Right lobe of liver (tissue), 6 donors: ENCODE measurements at regions of chr11 and their contacts with region 1.

Region 1: DNA sequence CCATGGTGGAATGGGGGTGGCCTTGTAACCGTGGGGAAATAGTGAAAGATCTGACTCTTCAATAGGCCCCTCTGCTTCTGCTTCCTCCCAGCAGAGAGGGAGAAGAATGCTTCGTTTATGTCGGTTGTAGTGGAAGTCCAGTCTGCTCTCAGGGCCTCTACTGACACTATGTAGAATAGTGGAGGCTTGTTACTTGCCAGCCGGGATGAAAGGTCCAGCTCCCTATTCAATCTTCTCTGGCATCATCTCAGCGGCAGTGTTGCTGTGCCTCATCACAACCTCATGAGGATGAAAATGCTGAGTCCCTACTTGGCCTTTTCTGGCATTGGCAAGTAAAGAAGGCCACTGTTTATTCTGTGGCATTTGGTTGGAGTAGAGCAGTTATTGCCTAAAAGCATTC is 820.9 kb upstream of the TENM4 start:
- DNase-seq: no peak
- ATAC-seq: no peak
- H3K4me3 ChIP-seq: no peak overlapping the region
- H3K27ac ChIP-seq: no peak overlapping the region
- H3K4me1 ChIP-seq: no peaks in the 10 kb centered on the region
- H3K27me3 ChIP-seq: no peaks in the 10 kb centered on the region
- CTCF ChIP-seq: no peak
- POLR2A ChIP-seq: no peak

Region 2: DNA sequence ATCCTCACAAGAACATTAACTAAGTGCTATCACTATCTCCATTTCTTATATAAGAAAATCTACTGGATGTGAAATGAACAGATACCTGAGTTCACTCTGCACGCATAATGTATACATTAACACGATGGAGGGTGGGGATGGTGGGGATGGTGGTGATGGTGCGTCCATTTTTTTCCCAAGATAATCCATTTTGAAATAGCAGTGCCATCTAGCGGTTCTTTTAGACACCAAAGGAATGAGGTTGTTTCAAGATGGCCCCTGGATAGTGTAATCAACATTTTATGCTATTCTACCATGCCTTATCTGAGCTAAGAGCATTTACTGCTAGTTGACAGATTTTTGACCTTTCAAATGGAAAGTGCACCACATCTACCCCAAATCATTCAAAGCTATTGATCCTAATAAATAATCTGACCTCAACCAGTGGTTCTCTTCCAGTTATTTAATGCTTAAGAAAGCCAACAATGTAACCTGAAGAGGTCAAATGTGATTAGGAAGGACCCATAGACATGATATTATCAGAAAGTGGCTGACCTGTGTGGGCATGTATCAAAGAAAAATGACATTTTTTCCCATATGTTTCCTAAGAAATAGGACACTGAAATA is 106.3 kb before region 1 on chr11:
- intact Hi-C with region 1: no loop called
- DNase-seq: no peak
- ATAC-seq: peak in 2 of 4 donors; percentile 39 to 50
- H3K4me3 ChIP-seq: no peak overlapping the region
- H3K27ac ChIP-seq: no peak overlapping the region
- H3K4me1 ChIP-seq: no peaks in the 10 kb centered on the region
- H3K27me3 ChIP-seq: no peaks in the 10 kb centered on the region
- CTCF ChIP-seq: peak; percentile 13 to 56 (median 42)
- POLR2A ChIP-seq: no peak

Region 3: DNA sequence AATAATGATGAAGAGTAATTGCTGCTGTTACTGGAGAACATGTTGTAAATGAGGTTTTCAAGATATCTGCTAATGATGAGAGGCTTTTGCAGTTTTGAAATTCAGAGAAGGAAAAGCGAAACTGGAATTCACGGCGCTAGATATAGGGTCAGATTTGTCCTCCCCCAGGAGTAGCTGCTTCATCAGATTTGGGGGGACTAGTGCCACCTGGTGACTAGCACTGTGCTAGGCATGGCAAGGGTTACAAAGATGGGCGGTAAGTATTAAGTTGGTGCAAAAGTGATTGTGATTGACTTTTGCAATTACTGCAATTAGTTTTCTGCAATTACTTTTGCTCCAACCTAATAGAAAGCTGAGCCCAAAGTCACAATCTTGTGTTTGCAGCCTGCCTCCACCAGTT is 59.0 kb after region 1 on chr11:
- intact Hi-C with region 1: loop called in 1 of 2 experiments (anchors 10 kb)
- DNase-seq: no peak
- ATAC-seq: no peak
- H3K4me3 ChIP-seq: no peak overlapping the region
- H3K27ac ChIP-seq: no peak overlapping the region
- H3K4me1 ChIP-seq: no peaks in the 10 kb centered on the region
- H3K27me3 ChIP-seq: no peaks in the 10 kb centered on the region
- CTCF ChIP-seq: peak in 1 of 4 donors; percentile 5
- POLR2A ChIP-seq: no peak